ENCODE measurements at regions of chr18 and their contacts with region 1.

Region 1: DNA sequence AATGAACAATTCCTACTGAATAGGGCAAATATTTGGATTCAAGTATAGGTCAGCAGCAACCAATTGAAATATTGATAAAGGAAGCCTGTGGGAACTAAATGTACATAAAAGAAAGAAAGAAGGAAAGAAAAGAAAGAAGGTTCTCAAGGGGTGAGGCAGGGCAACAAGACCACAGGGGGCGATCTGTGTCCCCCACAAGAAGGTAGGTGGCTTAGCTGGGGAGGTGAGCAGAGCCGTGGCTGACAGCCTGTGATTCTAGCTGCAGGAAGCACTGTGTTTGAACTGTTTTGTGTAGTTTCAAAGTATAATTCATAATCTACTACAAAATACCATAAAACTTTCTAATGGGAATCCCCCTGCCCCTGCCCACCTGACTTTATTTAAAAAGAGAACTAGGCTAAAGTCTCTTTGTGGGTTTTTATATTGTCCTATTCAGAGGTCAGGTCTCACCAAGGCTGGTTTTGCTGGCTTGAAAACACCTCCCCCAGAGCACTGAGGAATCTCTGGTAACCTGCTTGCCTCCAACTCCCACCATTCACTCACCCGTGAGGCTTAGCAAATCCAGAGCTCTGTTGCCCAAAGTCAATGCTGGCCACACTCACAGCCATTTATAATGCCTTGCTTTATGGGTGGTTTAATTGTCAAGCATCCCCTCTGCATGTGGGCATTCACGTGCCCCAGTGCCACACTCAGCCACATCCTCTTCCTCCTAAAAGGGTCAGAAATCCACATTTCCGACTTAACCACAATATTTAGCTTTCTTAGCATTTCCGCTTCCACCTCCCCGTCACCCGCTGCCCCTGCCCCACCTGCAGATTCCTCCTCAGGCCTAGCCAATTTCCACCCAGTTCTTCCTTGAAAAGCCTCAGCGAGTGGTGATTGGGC is 36.4 kb upstream of the LMAN1 start:
- DNase-seq: no peak
- ATAC-seq: no peak
- H3K4me3 ChIP-seq: no peak overlapping the region
- H3K27ac ChIP-seq: no peak overlapping the region
- H3K4me1 ChIP-seq: no peaks in the 10 kb centered on the region
- H3K27me3 ChIP-seq: no peaks in the 10 kb centered on the region
- CTCF ChIP-seq: no peak

Region 2: GRCh38 chr18:58998401-58999203 is 396.9 kb before region 1 on chr18:
- intact Hi-C with region 1: no loop called
- DNase-seq: no peak
- ATAC-seq: peak in 3 of 4 donors; percentile 26 to 45 (median 43)
- H3K4me3 ChIP-seq: no peak overlapping the region
- H3K27ac ChIP-seq: peak overlapping the region in 2 of 4 donors; percentile 10 to 47
- H3K4me1 ChIP-seq: peaks cover 0 to 5% (median 0%) of the 10 kb centered on the region in 3 donors
- H3K27me3 ChIP-seq: no peaks in the 10 kb centered on the region
- CTCF ChIP-seq: no peak

Region 3: GRCh38 chr18:59249205-59249774 is 146.2 kb before region 1 on chr18:
- intact Hi-C with region 1: no loop called
- DNase-seq: peak in 2 of 6 donors; percentile 53 to 68
- ATAC-seq: peak; percentile 77 to 94 (median 90)
- H3K4me3 ChIP-seq: no peak overlapping the region
- H3K27ac ChIP-seq: no peak overlapping the region
- H3K4me1 ChIP-seq: no peaks in the 10 kb centered on the region
- H3K27me3 ChIP-seq: peaks cover 0 to 4% (median 0%) of the 10 kb centered on the region in 4 donors
- CTCF ChIP-seq: peak; percentile 31 to 73 (median 50)

Region 4: GRCh38 chr18:59308248-59308937 is 87.1 kb before region 1 on chr18:
- intact Hi-C with region 1: loop called in 2 of 3 experiments (anchors 5 to 10 kb)
- DNase-seq: peak; percentile 61 to 95 (median 78)
- ATAC-seq: peak; percentile 98 to 100 (median 100)
- H3K4me3 ChIP-seq: peak overlapping the region in 2 of 4 donors; percentile 17 to 31
- H3K27ac ChIP-seq: no peak overlapping the region
- H3K4me1 ChIP-seq: peaks cover 0 to 6% (median 4%) of the 10 kb centered on the region in 3 donors
- H3K27me3 ChIP-seq: peaks cover 0 to 11% (median 0%) of the 10 kb centered on the region in 4 donors
- CTCF ChIP-seq: peak; percentile 56 to 81 (median 74)

Measured in pancreas (tissue), 10 donors.